SK-N-SH (cell line): ENCODE measurements at regions of chr10 and their contacts with region 1.

Region 1: DNA sequence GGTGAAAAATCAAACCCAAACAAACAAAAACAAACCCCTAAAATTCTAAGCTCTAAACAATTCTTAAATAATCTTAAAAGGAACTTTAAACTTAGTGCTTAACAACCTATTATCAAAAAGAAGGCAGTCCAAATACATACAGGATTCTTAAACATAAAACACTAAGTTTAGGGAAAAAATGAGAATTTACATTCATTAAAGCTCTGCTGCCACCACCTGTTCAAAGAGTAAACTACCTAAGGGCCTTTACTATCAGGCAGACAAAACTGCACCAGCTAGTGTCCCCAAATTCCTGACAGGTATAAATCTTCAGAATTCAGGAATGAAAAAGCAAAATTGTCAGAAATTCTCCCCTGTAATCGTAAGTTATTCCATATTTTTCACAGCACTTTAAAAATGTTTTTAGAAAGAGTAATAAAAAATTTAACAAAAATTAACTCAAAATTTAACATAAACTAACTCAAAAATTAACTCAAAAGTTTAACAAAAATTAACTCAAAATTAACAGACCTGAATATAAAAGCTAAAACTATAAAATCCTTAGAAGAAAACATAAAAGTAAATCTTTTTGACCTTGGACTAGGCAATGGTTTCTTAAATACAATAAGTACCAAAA is 55.1 kb downstream of the PDZD8 start:
- DNase-seq: peak; percentile 23
- H3K4me3 ChIP-seq: no peak overlapping the region; a peak in 1 of 4 replicates
- H3K27ac ChIP-seq: no peak overlapping the region
- H3K4me1 ChIP-seq: no peaks in the 10 kb centered on the region
- H3K27me3 ChIP-seq: no peaks in the 10 kb centered on the region
- CTCF ChIP-seq: peak; percentile 72
- EP300 ChIP-seq: no peak
- RAD21 ChIP-seq: peak; percentile 79

Region 2: GRCh38 chr10:117186832-117187615 is 133.1 kb before region 1 on chr10:
- CTCF ChIA-PET with region 1: interaction called, 16 read pairs
- POLR2A ChIA-PET with region 1: no interaction called
- DNase-seq: no peak
- H3K4me3 ChIP-seq: no peak overlapping the region
- H3K27ac ChIP-seq: no peak overlapping the region
- H3K4me1 ChIP-seq: no peaks in the 10 kb centered on the region
- H3K27me3 ChIP-seq: no peaks in the 10 kb centered on the region
- CTCF ChIP-seq: no peak
- EP300 ChIP-seq: no peak
- RAD21 ChIP-seq: no peak

Region 3: GRCh38 chr10:117241541-117242462 is 78.4 kb before region 1 on chr10:
- CTCF ChIA-PET with region 1: interaction called, 92 read pairs
- POLR2A ChIA-PET with region 1: no interaction called
- DNase-seq: peak; percentile 75
- H3K4me3 ChIP-seq: peak overlapping the region in 1 of 2 experiments; percentile 33; a peak in 1 of 4 replicates
- H3K27ac ChIP-seq: no peak overlapping the region
- H3K4me1 ChIP-seq: no peaks in the 10 kb centered on the region; a peak in 1 of 4 replicates
- H3K27me3 ChIP-seq: 0 out of 2 replicates have a peak, but pooled peaks cover 20% of the 10 kb centered on the region
- CTCF ChIP-seq: no peak
- EP300 ChIP-seq: no peak
- RAD21 ChIP-seq: no peak

Region 4: DNA sequence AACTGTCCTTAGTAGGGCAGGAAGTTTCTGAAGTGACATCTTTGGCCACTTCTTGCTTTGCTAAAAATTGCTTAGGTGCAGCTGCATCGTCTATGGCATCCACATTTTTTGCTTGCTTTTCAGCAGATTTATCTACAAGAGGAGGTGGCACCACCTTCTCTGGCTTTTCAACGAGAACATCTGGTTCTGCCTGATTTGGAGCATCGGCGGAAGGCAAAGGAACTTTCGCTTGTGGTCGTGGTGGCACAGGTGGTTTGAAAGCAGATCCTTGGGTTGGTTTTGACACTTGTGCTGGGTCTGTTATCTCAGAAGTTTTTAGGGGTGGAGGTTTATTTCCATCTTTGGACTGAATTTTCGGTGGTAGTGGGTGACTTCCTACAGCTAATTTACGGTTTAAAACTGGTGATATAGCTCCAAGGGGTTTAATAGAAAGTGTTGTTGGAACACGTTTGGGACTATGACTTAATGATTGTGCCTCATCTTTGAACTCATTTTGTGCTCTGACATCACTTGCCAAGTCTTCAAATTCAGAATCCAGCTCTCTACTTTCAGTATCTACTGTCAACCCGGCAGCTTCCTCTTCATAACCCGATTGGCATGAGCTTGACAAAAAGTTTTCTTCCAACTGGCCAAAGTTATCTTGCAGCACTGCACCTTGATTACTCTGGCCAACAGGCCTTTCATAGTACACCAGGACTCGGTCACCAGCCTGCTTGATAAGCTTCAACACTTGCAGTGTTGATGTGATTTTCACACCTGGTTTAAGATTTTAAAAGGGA is 35.3 kb before region 1 on chr10:
- CTCF ChIA-PET with region 1: interaction called, 19 read pairs
- POLR2A ChIA-PET with region 1: no interaction called
- DNase-seq: no peak
- H3K4me3 ChIP-seq: no peak overlapping the region
- H3K27ac ChIP-seq: no peak overlapping the region
- H3K4me1 ChIP-seq: no peaks in the 10 kb centered on the region
- H3K27me3 ChIP-seq: no peaks in the 10 kb centered on the region
- CTCF ChIP-seq: no peak
- EP300 ChIP-seq: no peak
- RAD21 ChIP-seq: no peak

Region 5: GRCh38 chr10:117334066-117334465 is 13.9 kb after region 1 on chr10:
- CTCF ChIA-PET with region 1: interaction called, 21 read pairs
- POLR2A ChIA-PET with region 1: interaction called, 3 read pairs
- DNase-seq: no peak
- H3K4me3 ChIP-seq: no peak overlapping the region; a peak in 1 of 4 replicates
- H3K27ac ChIP-seq: no peak overlapping the region
- H3K4me1 ChIP-seq: no peaks in the 10 kb centered on the region; a peak in 1 of 4 replicates
- H3K27me3 ChIP-seq: no peaks in the 10 kb centered on the region
- CTCF ChIP-seq: no peak
- EP300 ChIP-seq: no peak
- RAD21 ChIP-seq: no peak

Region 6: GRCh38 chr10:117366741-117367140 is 46.6 kb after region 1 on chr10:
- CTCF ChIA-PET with region 1: interaction called, 11 read pairs
- POLR2A ChIA-PET with region 1: no interaction called
- DNase-seq: no peak
- H3K4me3 ChIP-seq: no peak overlapping the region
- H3K27ac ChIP-seq: no peak overlapping the region
- H3K4me1 ChIP-seq: peaks cover 0 to 26% of the 10 kb centered on the region in 2 experiments; a peak in 3 of 4 replicates
- H3K27me3 ChIP-seq: no peaks in the 10 kb centered on the region
- CTCF ChIP-seq: no peak
- EP300 ChIP-seq: no peak
- RAD21 ChIP-seq: no peak

Region 7: DNA sequence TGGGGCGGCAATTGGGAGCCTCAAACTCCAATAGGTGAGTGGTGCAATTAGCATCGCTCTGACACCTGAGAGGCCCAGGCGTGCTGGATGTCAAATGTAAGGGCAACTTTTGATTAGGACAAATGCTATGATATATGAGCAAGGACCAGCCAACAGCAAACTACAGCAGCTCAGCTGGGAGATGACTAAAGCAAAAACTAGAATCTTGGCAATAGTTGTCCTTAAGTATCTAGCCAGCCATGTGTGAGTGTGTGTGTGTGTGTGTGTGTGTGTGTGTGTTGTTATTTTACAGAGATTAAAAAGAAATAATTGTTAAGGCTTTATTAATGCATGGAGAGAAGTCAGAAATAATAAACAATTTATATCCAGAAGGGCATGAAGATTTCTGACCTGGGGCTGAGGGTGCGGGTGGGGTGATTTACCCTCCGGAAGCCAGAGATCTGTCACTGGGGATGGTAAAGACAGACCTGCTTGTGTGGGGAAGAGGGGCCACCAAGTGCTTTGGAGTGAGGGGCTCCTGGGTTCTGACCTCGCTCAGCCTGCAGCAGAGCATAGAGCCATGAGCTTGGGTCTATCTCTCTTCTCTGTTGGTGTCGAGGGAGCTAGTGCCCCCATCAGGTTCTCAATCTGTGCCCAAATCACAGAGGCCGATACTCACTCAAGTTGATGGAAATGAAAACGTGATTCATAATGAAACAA is 299.7 kb after region 1 on chr10:
- CTCF ChIA-PET with region 1: no interaction called
- POLR2A ChIA-PET with region 1: no interaction called
- DNase-seq: no peak
- H3K4me3 ChIP-seq: no peak overlapping the region
- H3K27ac ChIP-seq: no peak overlapping the region
- H3K4me1 ChIP-seq: no peaks in the 10 kb centered on the region
- H3K27me3 ChIP-seq: no peaks in the 10 kb centered on the region
- CTCF ChIP-seq: no peak
- EP300 ChIP-seq: no peak
- RAD21 ChIP-seq: no peak